GM12878 (cell line): ENCODE measurements at regions of chr21 and their contacts with region 1.

Region 1: DNA sequence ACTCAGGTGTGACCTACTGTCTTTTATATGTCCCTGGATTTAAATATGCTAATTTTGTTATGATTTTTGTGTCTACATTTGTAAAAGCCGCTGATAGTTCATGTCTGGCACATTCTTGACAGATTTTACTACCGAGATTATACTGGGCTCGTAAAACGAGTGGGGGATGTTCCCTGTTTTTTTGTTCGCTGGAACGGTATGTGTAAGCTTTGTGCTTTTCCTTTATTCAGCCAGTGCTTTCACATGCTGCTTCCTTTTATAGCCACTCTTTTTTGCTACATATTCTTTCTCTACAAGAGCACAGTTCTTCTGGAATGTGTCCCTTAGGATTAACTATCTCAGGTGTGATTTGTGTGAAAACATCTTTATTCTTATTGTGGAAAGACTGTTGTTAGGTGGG is 46.6 kb downstream of the ADARB1 start:
- DNase-seq: no peak
- ATAC-seq: no peak
- H3K4me3 ChIP-seq: no peak overlapping the region
- H3K27ac ChIP-seq: no peak overlapping the region
- H3K4me1 ChIP-seq: peaks cover 18% of the 10 kb centered on the region
- H3K27me3 ChIP-seq: no peaks in the 10 kb centered on the region
- CTCF ChIP-seq: no peak
- EP300 ChIP-seq: no peak
- POLR2A ChIP-seq: no peak
- RAD21 ChIP-seq: no peak

Region 2: GRCh38 chr21:44949779-44950198 is 171.2 kb before region 1 on chr21:
- CTCF ChIA-PET with region 1: interaction called, 235 read pairs
- POLR2A ChIA-PET with region 1: no interaction called
- RAD21 ChIA-PET with region 1: interaction called, 141 read pairs
- SMC1A ChIA-PET with region 1: interaction called, 153 read pairs
- in situ Hi-C with region 1: loop called (anchors 5 kb)
- intact Hi-C with region 1: no loop called
- DNase-seq: no peak
- ATAC-seq: peak; percentile 96
- H3K4me3 ChIP-seq: no peak overlapping the region
- H3K27ac ChIP-seq: no peak overlapping the region
- H3K4me1 ChIP-seq: no peaks in the 10 kb centered on the region
- H3K27me3 ChIP-seq: no peaks in the 10 kb centered on the region
- CTCF ChIP-seq: peak; percentile 90 to 96 (median 95); a peak in 5 of 6 replicates
- EP300 ChIP-seq: no peak
- POLR2A ChIP-seq: no peak
- RAD21 ChIP-seq: peak; percentile 91

Region 3: GRCh38 chr21:45109831-45110492 is 11.0 kb before region 1 on chr21:
- CTCF ChIA-PET with region 1: interaction called, 626 read pairs
- POLR2A ChIA-PET with region 1: interaction called, 11 read pairs
- RAD21 ChIA-PET with region 1: interaction called, 204 read pairs
- SMC1A ChIA-PET with region 1: interaction called, 560 read pairs
- in situ Hi-C with region 1: no loop called
- intact Hi-C with region 1: loop called (anchors 2 kb)
- DNase-seq: peak; percentile 94
- ATAC-seq: peak; percentile 82
- H3K4me3 ChIP-seq: peak overlapping the region; percentile 54; the same call in 1 of the 2 replicates
- H3K27ac ChIP-seq: peak overlapping the region; percentile 74
- H3K4me1 ChIP-seq: peaks cover 42% of the 10 kb centered on the region
- H3K27me3 ChIP-seq: no peaks in the 10 kb centered on the region; a peak in 1 of 4 replicates
- CTCF ChIP-seq: no peak; a peak in 1 of 6 replicates
- EP300 ChIP-seq: peak; percentile 82 to 98; a peak in 3 of 4 replicates
- POLR2A ChIP-seq: no peak
- RAD21 ChIP-seq: peak; percentile 19; the same call in 1 of the 2 replicates

Region 4: GRCh38 chr21:45556302-45556644 is 435.3 kb after region 1 on chr21:
- CTCF ChIA-PET with region 1: no interaction called
- POLR2A ChIA-PET with region 1: no interaction called
- RAD21 ChIA-PET with region 1: no interaction called
- SMC1A ChIA-PET with region 1: no interaction called
- in situ Hi-C with region 1: no loop called
- intact Hi-C with region 1: no loop called
- DNase-seq: no peak
- ATAC-seq: no peak
- H3K4me3 ChIP-seq: peak overlapping the region; percentile 69; the same call in 1 of the 2 replicates
- H3K27ac ChIP-seq: no peak overlapping the region
- H3K4me1 ChIP-seq: peaks cover 19% of the 10 kb centered on the region
- H3K27me3 ChIP-seq: no peaks in the 10 kb centered on the region; a peak in 1 of 4 replicates
- CTCF ChIP-seq: no peak
- EP300 ChIP-seq: no peak
- POLR2A ChIP-seq: no peak
- RAD21 ChIP-seq: no peak